MCF 10A (cell line): ENCODE measurements at regions of chr9 and their contacts with region 1.

Region 1: DNA sequence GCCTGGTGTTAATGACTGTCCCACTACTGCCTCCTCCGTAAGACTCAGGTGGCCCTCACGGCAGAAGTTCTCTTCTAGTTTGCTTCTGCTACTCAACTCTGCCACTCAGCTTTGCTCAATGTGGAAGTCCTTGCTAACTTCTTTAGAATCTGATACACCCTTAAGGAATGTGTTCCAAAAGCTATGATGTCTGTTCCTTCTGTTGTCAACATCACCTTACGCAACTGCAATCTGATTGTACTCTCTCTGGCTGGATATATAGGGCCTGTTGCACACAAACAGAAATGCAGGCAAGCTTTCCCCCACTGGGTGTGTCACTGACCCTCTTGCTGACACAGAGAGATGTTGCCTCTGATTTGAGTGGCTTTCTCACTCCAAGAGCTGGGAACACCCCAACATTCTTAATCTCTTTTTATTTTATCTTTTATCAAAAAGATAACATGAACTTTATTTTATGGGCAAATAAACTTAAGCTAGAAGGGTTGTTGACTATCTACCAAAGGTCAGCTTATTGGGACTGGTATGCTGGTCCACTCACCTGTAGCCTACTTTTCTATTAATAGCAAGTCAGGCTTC is 25.3 kb downstream of the TMEM252 start:
- DNase-seq: peak; percentile 84
- H3K4me3 Mint-ChIP-seq: peak overlapping the region; percentile 6
- H3K27ac Mint-ChIP-seq: peak overlapping the region; percentile 94
- H3K4me1 Mint-ChIP-seq: peaks cover 18% of the 10 kb centered on the region
- H3K27me3 Mint-ChIP-seq: no peaks in the 10 kb centered on the region
- CTCF ChIP-seq: no peak

Region 2: DNA sequence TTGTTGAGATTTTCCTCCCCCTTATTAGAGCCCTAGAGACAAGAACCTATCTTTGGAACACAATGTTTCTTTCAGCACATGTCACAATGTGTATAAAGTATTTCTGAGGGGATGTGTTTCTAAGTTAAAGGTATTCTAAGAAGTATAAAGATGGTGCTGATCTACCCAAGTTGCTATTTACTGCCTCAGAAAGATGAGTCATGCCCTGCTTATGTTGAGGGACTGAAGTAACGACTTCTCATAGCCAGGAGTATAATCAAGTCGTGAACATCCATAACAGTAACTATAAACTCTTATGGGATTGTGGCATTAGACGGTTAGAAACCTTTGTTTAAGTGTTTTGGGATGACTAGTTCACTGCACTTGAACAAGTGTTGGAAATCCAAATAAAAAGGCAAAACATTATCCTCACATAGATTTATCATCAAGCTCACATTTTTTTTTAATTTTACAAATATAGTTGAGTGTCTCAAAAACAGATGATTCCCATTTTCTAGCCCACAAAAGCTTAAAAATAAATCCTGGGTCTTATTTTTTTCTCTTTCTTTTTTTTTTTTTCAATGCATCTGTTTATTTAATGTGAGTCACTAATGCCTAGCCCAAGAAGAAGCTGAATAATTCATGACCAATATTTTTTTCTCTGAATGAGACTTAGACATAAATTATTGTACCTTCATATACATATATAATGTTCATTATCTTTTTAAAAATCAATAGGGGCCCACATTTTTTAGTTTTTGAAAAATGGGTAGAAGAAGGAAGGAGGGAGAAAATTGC is 37.5 kb after region 1 on chr9:
- CTCF ChIA-PET with region 1: interaction called, 4 read pairs
- POLR2A ChIA-PET with region 1: interaction called, 5 read pairs
- intact Hi-C with region 1: loop called (anchors 5 kb)
- DNase-seq: peak; percentile 18
- H3K4me3 Mint-ChIP-seq: no peak overlapping the region
- H3K27ac Mint-ChIP-seq: peak overlapping the region; percentile 67
- H3K4me1 Mint-ChIP-seq: peaks cover 14% of the 10 kb centered on the region
- H3K27me3 Mint-ChIP-seq: peaks cover 17% of the 10 kb centered on the region
- CTCF ChIP-seq: no peak